ENCODE measurements at regions of chr1 and their contacts with region 1.

Region 1: DNA sequence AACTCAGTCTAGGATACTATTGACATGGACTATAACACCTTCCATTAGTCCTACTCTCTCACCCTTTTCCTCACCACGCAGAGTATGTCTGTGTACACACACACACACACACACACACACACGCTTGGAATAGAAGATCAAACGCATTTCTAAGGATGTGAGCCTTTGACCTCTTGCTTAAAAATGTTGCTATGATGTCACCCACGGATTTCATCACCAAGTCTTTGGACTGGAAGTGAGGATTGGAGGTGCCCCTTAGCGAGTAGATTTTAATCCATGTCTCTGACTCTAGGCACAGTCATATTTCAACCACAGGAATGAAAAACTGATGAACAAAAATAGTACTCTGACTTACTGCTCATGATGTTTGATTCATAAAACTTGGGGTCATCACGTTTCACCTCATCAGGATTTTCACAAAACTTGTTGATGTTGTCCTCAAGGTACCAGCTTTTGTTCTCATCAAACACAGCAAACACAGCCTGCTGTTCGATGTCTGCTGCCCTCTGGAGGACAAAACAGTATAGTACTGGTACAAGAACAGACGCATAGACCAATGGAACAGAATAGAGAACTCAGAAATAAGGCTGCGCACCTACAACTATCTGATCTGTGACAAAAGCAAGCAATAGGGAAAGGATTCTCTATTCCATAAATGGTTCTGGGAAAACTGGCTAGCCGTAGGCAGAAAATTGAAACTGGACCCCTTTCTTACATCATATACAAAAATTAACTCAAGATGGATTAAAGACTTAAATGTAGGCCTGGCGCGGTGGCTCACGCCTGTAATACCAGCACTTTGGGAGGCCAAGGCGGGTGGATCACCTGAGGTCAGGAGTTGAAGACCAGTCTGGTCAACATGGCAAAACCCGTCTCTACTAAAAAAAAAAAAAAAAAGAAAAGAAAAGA is 39.9 kb downstream of the F5 start:
- DNase-seq: peak; percentile 26
- ATAC-seq: peak; percentile 86

Region 2: GRCh38 chr1:169466259-169467230 is 79.8 kb before region 1 on chr1:
- intact Hi-C with region 1: loop called (anchors 5 kb)
- DNase-seq: no peak
- ATAC-seq: peak; percentile 26

Region 3: GRCh38 chr1:169711469-169712281 is 165.3 kb after region 1 on chr1 and contains the start of gene SELL:
- intact Hi-C with region 1: loop called (anchors 5 kb)
- DNase-seq: no peak
- ATAC-seq: peak; percentile 95
- total RNA-seq, gene SELL: 2.1 TPM

Region 4: DNA sequence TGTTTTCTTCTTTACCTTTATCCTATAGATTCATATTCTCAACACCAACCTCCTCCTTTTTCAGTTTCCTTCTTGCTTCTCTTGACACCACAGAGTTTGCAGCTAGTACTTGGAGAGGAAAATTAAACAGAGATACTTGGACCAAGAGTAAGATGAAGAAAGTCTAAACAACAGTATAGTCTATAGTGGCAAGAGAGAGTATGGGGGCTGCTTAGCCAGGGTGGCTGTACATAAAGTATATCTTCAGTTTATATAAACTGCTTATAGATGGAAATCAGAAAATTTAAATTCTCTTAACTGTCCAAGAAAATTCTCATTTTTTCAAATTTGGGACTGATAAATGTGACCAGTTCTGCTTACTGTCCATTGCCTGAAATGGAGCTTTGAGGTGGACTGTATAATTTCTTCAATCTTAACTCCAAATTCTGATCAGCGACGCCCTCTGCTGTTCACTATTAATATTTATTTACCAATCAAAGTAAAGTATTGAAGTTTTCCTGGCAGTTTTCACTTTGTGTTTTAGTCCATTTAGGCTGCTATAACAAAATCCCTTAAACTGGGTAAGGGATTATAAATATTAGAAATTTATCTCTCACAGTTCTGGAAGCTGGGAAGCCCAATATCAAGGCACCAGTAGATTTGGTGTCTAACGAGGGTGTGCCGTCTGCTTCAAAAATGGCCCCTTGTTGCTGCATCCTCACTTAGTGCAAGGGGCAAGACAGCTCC is 263.2 kb after region 1 on chr1:
- intact Hi-C with region 1: loop called (anchors 5 kb)
- DNase-seq: no peak
- ATAC-seq: peak; percentile 20